ENCODE measurements at regions of chr5 and their contacts with region 1.

Region 1: DNA sequence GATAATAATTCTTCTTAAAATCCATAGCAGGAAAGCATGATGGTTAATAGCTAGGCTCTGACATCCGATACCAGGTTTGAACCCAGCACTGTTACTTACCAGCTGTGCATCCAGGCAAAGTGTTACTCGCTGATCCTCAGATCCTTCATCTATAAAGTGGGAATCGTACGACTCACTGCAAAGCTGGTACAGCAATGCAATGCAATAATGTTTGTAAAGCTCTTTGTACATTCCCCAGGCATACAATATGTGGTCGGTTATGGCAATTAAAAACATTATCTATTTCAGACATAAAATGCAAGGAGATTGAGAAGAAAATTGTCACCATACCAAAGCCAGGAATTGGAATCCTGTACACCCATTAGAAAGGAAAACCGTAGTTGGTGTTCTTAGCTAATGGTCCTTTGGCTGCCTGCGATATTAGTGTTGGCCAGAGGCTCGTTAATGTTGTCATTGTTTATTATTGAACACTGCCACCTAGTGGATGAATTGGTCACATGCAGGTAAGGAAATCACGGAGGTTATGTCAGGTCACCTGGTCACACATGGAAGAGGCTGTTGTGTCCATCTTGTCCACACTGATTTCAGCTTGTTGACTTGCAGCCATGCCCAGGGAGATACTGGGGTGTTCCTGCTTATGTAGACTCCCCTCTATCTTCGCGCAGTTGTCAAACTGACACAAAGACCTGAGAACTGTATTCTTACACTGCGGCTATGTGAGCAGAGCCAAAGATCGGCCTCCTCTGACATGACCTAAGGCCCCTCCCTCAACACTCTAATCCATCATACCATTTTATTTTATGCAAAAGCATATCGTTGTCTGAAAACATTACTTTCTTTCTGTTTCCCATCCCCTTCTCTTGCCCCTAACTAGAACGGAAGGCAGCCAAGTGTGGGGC is 87.5 kb upstream of the PPP2R2B start:
- DNase-seq: peak; percentile 38 to 83
- ATAC-seq: peak; percentile 90 to 99 (median 97)
- H3K4me3 ChIP-seq: no peak overlapping the region
- H3K4me3 Mint-ChIP-seq: no peak overlapping the region
- H3K27ac ChIP-seq: no peak overlapping the region
- H3K27ac Mint-ChIP-seq: no peak overlapping the region
- H3K4me1 ChIP-seq: no peaks in the 10 kb centered on the region
- H3K4me1 Mint-ChIP-seq: no peaks in the 10 kb centered on the region
- H3K27me3 ChIP-seq: no peaks in the 10 kb centered on the region
- H3K27me3 Mint-ChIP-seq: peaks cover 6 to 19% of the 10 kb centered on the region in 2 donors
- CTCF ChIP-seq: peak; percentile 83

Region 2: GRCh38 chr5:146541958-146542849 is 423.8 kb before region 1 on chr5:
- intact Hi-C with region 1: loop called (anchors 1 kb)
- DNase-seq: peak; percentile 64 to 78
- ATAC-seq: peak; percentile 80 to 99 (median 89)
- H3K4me3 ChIP-seq: no peak overlapping the region
- H3K4me3 Mint-ChIP-seq: no peak overlapping the region
- H3K27ac ChIP-seq: no peak overlapping the region
- H3K27ac Mint-ChIP-seq: no peak overlapping the region
- H3K4me1 ChIP-seq: no peaks in the 10 kb centered on the region
- H3K4me1 Mint-ChIP-seq: no peaks in the 10 kb centered on the region
- H3K27me3 ChIP-seq: peaks cover 4% of the 10 kb centered on the region
- H3K27me3 Mint-ChIP-seq: peaks cover 0 to 7% of the 10 kb centered on the region in 2 donors
- CTCF ChIP-seq: peak; percentile 92

Region 3: GRCh38 chr5:146565764-146566367 is 400.1 kb before region 1 on chr5:
- intact Hi-C with region 1: loop called (anchors 1 kb)
- DNase-seq: peak; percentile 29 to 73
- ATAC-seq: peak; percentile 91 to 99 (median 99)
- H3K4me3 ChIP-seq: no peak overlapping the region
- H3K4me3 Mint-ChIP-seq: no peak overlapping the region
- H3K27ac ChIP-seq: no peak overlapping the region
- H3K27ac Mint-ChIP-seq: no peak overlapping the region
- H3K4me1 ChIP-seq: no peaks in the 10 kb centered on the region
- H3K4me1 Mint-ChIP-seq: peaks cover 0 to 6% of the 10 kb centered on the region in 2 donors
- H3K27me3 ChIP-seq: no peaks in the 10 kb centered on the region
- H3K27me3 Mint-ChIP-seq: no peaks in the 10 kb centered on the region
- CTCF ChIP-seq: peak; percentile 61

Region 4: GRCh38 chr5:146993876-146994530 is 28.0 kb after region 1 on chr5:
- intact Hi-C with region 1: no loop called
- DNase-seq: no peak
- ATAC-seq: no peak
- H3K4me3 ChIP-seq: no peak overlapping the region
- H3K4me3 Mint-ChIP-seq: no peak overlapping the region
- H3K27ac ChIP-seq: no peak overlapping the region
- H3K27ac Mint-ChIP-seq: no peak overlapping the region
- H3K4me1 ChIP-seq: no peaks in the 10 kb centered on the region
- H3K4me1 Mint-ChIP-seq: no peaks in the 10 kb centered on the region
- H3K27me3 ChIP-seq: no peaks in the 10 kb centered on the region
- H3K27me3 Mint-ChIP-seq: peaks cover 13 to 19% of the 10 kb centered on the region in 2 donors
- CTCF ChIP-seq: no peak

Measured in natural killer cell (primary cell).